CD8-positive, alpha-beta T cell (primary cell): ENCODE measurements at regions of chr11 and their contacts with region 1.

Region 1: GRCh38 chr11:76799066-76799804 is 16.1 kb downstream of the TSKU start:
- DNase-seq: peak; percentile 45 to 89 (median 78)
- ATAC-seq: peak; percentile 76
- H3K4me3 ChIP-seq: peak overlapping the region; percentile 34 to 51
- H3K4me3 Mint-ChIP-seq: peak overlapping the region; percentile 54
- H3K27ac ChIP-seq: no peak overlapping the region
- H3K27ac Mint-ChIP-seq: no peak overlapping the region
- H3K4me1 ChIP-seq: peaks cover 23% of the 10 kb centered on the region
- H3K4me1 Mint-ChIP-seq: peaks cover 21% of the 10 kb centered on the region
- H3K27me3 ChIP-seq: no peaks in the 10 kb centered on the region
- H3K27me3 Mint-ChIP-seq: peaks cover 4% of the 10 kb centered on the region
- CTCF ChIP-seq: peak; percentile 91

Region 2: GRCh38 chr11:76721755-76722677 is 77.2 kb before region 1 on chr11:
- CTCF ChIA-PET with region 1: interaction called, 11 read pairs
- POLR2A ChIA-PET with region 1: no interaction called
- intact Hi-C with region 1: loop called (anchors 1 kb)
- DNase-seq: peak; percentile 41 to 83 (median 74)
- ATAC-seq: peak; percentile 98
- H3K4me3 ChIP-seq: no peak overlapping the region
- H3K4me3 Mint-ChIP-seq: peak overlapping the region; percentile 20
- H3K27ac ChIP-seq: no peak overlapping the region
- H3K27ac Mint-ChIP-seq: no peak overlapping the region
- H3K4me1 ChIP-seq: no peaks in the 10 kb centered on the region
- H3K4me1 Mint-ChIP-seq: peaks cover 6% of the 10 kb centered on the region
- H3K27me3 ChIP-seq: peaks cover 0 to 3% of the 10 kb centered on the region in 2 experiments
- H3K27me3 Mint-ChIP-seq: peaks cover 8% of the 10 kb centered on the region
- CTCF ChIP-seq: peak; percentile 80

Region 3: GRCh38 chr11:76734456-76735420 is 64.5 kb before region 1 on chr11:
- CTCF ChIA-PET with region 1: interaction called, 61 read pairs
- POLR2A ChIA-PET with region 1: interaction called, 5 read pairs
- intact Hi-C with region 1: loop called in 1 of 2 experiments (anchors 1 kb)
- DNase-seq: no peak
- ATAC-seq: no peak
- H3K4me3 ChIP-seq: no peak overlapping the region
- H3K4me3 Mint-ChIP-seq: no peak overlapping the region
- H3K27ac ChIP-seq: no peak overlapping the region
- H3K27ac Mint-ChIP-seq: no peak overlapping the region
- H3K4me1 ChIP-seq: no peaks in the 10 kb centered on the region
- H3K4me1 Mint-ChIP-seq: no peaks in the 10 kb centered on the region
- H3K27me3 ChIP-seq: no peaks in the 10 kb centered on the region
- H3K27me3 Mint-ChIP-seq: peaks cover 4% of the 10 kb centered on the region
- CTCF ChIP-seq: no peak

Region 4: GRCh38 chr11:76860539-76861475 is 61.6 kb after region 1 on chr11 and contains the start of gene ACER3:
- CTCF ChIA-PET with region 1: interaction called, 7 read pairs
- POLR2A ChIA-PET with region 1: no interaction called
- intact Hi-C with region 1: loop called in 1 of 2 experiments (anchors 1 kb)
- DNase-seq: peak; percentile 38 to 92 (median 76)
- ATAC-seq: peak; percentile 96
- H3K4me3 ChIP-seq: peak within 1 kb of the TSS; percentile 63 to 82
- H3K4me3 Mint-ChIP-seq: peak within 1 kb of the TSS; percentile 90
- H3K27ac ChIP-seq: peak within 1 kb of the TSS; percentile 37 to 60
- H3K27ac Mint-ChIP-seq: peak within 1 kb of the TSS; percentile 87
- H3K4me1 ChIP-seq: peaks cover 21% of the 10 kb centered on the region
- H3K4me1 Mint-ChIP-seq: peaks cover 31% of the 10 kb centered on the region
- H3K27me3 ChIP-seq: no peaks in the 10 kb centered on the region
- H3K27me3 Mint-ChIP-seq: no peaks in the 10 kb centered on the region
- CTCF ChIP-seq: no peak
- total RNA-seq, gene ACER3: 5.0 to 5.8 TPM